AG04450 (cell line): ENCODE measurements at regions of chr1 and their contacts with region 1.

Region 1: DNA sequence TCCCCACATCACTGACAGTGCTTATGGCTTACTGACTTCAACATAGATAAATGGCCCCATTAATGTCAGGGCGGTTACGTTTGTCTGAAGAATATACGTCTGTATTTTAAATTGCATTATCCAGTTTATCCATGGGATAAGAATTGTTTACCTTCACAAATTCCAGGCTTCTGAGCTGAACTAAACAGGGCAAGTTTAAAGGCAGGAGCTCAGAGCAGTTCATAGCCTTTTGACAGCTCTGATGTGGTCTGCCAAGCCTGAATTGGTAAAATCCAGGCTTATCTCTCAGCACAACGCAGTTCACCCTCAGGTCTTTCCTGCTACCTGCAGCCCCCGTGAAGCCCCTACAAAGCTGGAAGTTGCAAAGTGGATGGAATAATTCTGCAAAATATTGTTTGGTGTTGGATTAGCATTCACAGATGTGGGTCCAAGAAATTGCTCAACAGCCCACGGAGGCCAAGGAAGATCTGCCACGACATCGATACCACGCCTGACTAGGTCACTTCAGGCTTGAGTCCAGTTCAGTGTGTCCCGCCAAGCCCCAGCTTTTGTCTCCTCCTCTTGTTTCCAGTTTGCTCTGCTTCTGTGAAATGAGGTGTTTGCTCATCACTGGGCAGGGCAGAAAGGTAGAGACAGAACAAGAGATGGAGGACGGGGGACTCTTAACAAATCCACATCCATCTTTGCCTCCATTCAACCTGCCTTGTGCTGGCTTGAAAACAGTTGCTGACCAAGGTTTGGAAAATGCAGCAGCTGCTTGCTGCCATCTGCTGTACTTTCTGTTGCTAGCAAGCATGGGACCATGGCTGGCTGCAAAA is 79.8 kb upstream of the GREM2 start:
- DNase-seq: no peak
- H3K4me3 ChIP-seq: no peak overlapping the region
- H3K27ac ChIP-seq: no peak overlapping the region
- H3K27me3 ChIP-seq: no peaks in the 10 kb centered on the region
- CTCF ChIP-seq: peak; percentile 98

Region 2: DNA sequence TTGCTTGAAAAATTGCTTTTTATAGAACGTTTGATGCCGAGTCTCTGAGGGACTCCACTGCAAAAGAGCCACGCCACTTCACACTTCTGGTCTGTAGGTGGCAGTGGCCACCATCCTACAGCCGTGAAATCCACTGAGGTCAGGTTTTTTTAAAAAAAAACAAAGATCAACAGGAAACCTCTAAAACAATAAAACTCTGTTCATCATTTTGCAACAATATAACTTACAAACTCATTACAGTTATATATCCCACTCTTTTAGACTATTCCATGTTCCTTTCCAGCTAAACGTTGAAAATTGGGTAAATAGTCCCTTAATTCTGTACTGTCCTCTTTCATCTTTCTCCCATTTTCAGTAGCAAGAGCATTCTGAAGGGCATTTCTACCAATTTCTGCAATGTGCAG is 664.7 kb before region 1 on chr1:
- CTCF ChIA-PET with region 1: interaction called, 12 read pairs
- POLR2A ChIA-PET with region 1: no interaction called
- DNase-seq: no peak
- H3K4me3 ChIP-seq: no peak overlapping the region
- H3K27ac ChIP-seq: no peak overlapping the region
- H3K27me3 ChIP-seq: no peaks in the 10 kb centered on the region
- CTCF ChIP-seq: peak; percentile 99

Region 3: GRCh38 chr1:240212556-240212955 is 479.2 kb before region 1 on chr1:
- CTCF ChIA-PET with region 1: interaction called, 10 read pairs
- POLR2A ChIA-PET with region 1: no interaction called
- DNase-seq: no peak
- H3K4me3 ChIP-seq: no peak overlapping the region
- H3K27ac ChIP-seq: no peak overlapping the region
- H3K27me3 ChIP-seq: no peaks in the 10 kb centered on the region
- CTCF ChIP-seq: no peak

Region 4: DNA sequence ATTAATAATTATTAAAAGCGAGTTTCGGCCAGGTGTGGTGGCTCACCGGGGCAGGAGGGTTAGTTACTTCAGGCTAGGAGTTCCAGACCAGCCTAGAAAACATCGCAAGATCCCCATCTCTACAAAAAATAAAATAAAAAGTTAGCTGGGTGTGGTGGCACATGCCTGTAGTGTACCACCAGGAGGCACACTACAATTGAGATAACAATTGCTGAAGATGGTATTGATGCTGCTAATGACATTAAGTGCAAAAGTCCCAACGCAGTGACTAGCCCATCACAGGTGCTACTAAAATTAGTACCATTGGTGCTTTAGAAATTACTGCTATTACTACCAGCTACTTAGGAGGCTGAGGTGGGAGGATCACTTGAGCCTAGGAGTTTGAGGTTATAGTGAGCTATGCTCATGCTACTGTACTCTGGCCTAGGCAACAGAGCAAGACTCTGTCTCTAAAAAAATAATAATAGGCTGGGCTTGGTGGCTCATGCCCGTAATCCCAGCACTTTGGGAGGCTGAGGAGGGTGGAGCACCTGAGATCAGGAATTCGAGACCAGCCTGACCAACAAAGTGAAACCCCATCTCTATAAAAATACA is 236.4 kb before region 1 on chr1:
- CTCF ChIA-PET with region 1: interaction called, 27 read pairs
- POLR2A ChIA-PET with region 1: no interaction called
- DNase-seq: no peak
- H3K4me3 ChIP-seq: no peak overlapping the region
- H3K27ac ChIP-seq: no peak overlapping the region
- H3K27me3 ChIP-seq: no peaks in the 10 kb centered on the region
- CTCF ChIP-seq: peak; percentile 59

Region 5: DNA sequence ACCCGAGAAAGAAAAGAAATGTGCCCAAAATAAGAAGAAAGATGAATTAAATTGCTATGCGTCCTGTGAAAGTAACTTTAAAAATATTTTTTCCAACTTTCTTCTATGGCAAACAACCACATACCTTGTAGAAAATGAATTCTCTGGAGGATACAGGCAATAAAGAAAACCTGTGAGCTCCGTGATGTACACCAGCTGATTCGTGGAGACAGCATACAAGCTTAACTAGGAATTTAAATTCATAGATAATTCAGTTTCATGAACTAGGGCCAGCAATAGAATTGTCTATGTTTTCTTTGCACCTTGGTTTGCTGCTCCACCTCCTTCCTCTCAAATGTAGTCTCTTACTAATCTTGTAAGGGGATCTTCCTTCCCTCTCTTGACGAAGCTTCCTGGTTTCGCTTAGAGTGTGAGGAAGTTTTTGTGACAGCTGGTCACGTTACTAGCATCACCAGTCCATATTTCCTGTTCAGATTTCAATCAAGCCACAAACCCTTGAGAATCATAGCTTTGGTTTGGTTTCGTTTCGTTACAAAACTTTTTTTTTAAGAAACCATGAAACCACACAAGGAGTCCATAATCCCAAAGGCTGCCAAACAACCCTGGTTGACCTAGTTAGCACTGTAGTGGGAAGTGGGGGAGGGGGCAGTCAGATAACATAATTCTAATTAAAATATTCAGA is 115.6 kb before region 1 on chr1:
- CTCF ChIA-PET with region 1: no interaction called
- POLR2A ChIA-PET with region 1: no interaction called
- DNase-seq: no peak
- H3K4me3 ChIP-seq: peak overlapping the region; percentile 1
- H3K27ac ChIP-seq: no peak overlapping the region
- H3K27me3 ChIP-seq: no peaks in the 10 kb centered on the region
- CTCF ChIP-seq: no peak

Region 6: GRCh38 chr1:240602189-240602588 is 89.5 kb before region 1 on chr1:
- CTCF ChIA-PET with region 1: interaction called, 12 read pairs
- POLR2A ChIA-PET with region 1: no interaction called
- DNase-seq: no peak
- H3K4me3 ChIP-seq: no peak overlapping the region
- H3K27ac ChIP-seq: no peak overlapping the region
- H3K27me3 ChIP-seq: no peaks in the 10 kb centered on the region
- CTCF ChIP-seq: peak; percentile 28

Region 7: DNA sequence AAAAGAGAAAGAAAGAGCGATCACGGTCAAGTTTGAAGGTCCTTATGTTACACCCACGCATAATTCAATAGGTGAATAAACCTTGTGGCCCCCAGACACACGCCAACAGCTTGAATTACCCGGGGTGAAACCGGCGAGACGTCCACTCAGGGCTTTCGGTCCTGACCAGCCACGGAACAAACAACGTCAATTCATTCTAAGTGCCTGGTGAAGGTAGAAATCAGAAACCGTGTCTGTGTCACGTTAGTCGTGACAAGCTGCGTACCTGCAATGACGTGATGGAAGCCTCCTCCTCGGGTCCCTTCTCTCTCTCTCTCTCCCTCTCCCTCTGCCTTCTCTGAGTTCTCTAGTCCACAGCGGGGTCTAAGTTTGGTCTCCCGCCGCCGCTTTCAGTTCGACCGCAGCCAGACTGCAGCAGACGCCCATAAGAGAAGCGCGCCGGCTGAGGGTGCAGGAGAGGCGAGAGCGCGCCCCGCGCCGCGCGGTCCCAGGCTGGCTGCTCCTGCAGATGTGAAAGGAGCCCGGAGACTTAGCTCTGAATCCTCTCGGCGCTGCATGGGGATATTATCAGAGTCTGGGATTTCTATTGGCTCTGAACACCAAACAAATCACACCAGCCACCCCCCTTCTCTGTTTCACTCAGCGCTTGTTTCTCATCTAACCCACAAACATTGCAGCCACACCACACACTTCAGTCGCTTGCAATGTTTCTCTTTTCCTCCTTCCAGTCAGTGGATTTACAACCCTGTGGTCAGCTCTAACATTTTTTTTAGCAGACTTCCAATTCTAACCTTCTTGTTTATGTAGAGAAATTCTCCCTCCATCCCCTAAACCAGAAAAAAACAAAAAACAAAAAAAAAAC is 79.9 kb before region 1 on chr1 and contains the start of gene GREM2:
- CTCF ChIA-PET with region 1: interaction called, 6 read pairs
- POLR2A ChIA-PET with region 1: interaction called, 12 read pairs
- DNase-seq: peak; percentile 86
- H3K4me3 ChIP-seq: peak within 1 kb of the TSS; percentile 78
- H3K27ac ChIP-seq: no peak within 1 kb of the TSS
- H3K27me3 ChIP-seq: no peaks in the 10 kb centered on the region
- CTCF ChIP-seq: no peak
- polyA plus RNA-seq, gene GREM2: 2.1 and 2.3 TPM in 2 replicates